ENCODE measurements at regions of chr7 and their contacts with region 1.

Region 1: GRCh38 chr7:87933945-87934698 is at the start of gene ADAM22:
- DNase-seq: peak; percentile 85
- H3K4me3 ChIP-seq: peak within 1 kb of the TSS; percentile 56 to 58
- H3K27ac ChIP-seq: peak within 1 kb of the TSS; percentile 26 to 59
- H3K4me1 ChIP-seq: no peaks in the 10 kb centered on the region
- H3K27me3 ChIP-seq: no peaks in the 10 kb centered on the region
- CTCF ChIP-seq: peak in 1 of 4 experiments; percentile 22
- POLR2A ChIP-seq: peak; percentile 44
- total RNA-seq, gene ADAM22: 8.4 to 8.5 TPM

Region 2: GRCh38 chr7:87702313-87702712 is 231.8 kb before region 1 on chr7:
- intact Hi-C with region 1: no loop called
- DNase-seq: no peak
- H3K4me3 ChIP-seq: no peak overlapping the region
- H3K27ac ChIP-seq: no peak overlapping the region
- H3K4me1 ChIP-seq: no peaks in the 10 kb centered on the region
- H3K27me3 ChIP-seq: no peaks in the 10 kb centered on the region
- CTCF ChIP-seq: no peak
- POLR2A ChIP-seq: no peak

Region 3: GRCh38 chr7:88040694-88041093 is 106.6 kb after region 1 on chr7:
- intact Hi-C with region 1: no loop called
- DNase-seq: no peak
- H3K4me3 ChIP-seq: no peak overlapping the region
- H3K27ac ChIP-seq: no peak overlapping the region
- H3K4me1 ChIP-seq: no peaks in the 10 kb centered on the region
- H3K27me3 ChIP-seq: no peaks in the 10 kb centered on the region
- CTCF ChIP-seq: no peak
- POLR2A ChIP-seq: no peak

Region 4: DNA sequence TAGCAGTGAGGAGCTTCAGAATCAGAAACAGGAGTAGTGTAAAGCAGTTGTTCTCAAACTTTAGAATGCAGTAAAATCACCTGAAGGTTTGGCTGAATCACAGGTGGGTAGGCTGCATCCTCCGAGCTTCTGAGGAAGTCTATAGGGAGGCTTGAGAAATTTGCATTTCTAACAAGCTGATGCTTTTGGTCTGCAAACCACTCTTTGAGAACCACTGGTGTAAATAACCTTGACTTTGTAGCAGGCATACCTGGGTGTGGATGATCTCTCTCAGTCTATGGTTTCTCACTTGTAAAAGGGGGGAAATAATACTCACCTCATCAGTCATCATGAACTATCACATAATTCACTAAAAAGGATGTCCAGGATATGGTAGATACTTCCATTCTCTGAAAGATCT is 167.6 kb after region 1 on chr7:
- intact Hi-C with region 1: loop called (anchors 10 kb)
- DNase-seq: no peak
- H3K4me3 ChIP-seq: no peak overlapping the region
- H3K27ac ChIP-seq: no peak overlapping the region
- H3K4me1 ChIP-seq: no peaks in the 10 kb centered on the region
- H3K27me3 ChIP-seq: no peaks in the 10 kb centered on the region
- CTCF ChIP-seq: no peak
- POLR2A ChIP-seq: no peak